PC-9 (cell line): ENCODE measurements at regions of chr4 and their contacts with region 1.

Region 1: GRCh38 chr4:173257732-173258717 is 76.1 kb downstream of the HMGB2 start:
- DNase-seq: peak; percentile 48 to 57
- H3K4me3 ChIP-seq: no peak overlapping the region
- H3K27ac ChIP-seq: no peak overlapping the region
- H3K4me1 ChIP-seq: peaks cover 6% of the 10 kb centered on the region
- H3K27me3 ChIP-seq: no peaks in the 10 kb centered on the region
- CTCF ChIP-seq: peak; percentile 80

Region 2: GRCh38 chr4:172830295-172830764 is 427.7 kb before region 1 on chr4:
- CTCF ChIA-PET with region 1: no interaction called
- POLR2A ChIA-PET with region 1: no interaction called
- intact Hi-C with region 1: loop called (anchors 10 kb)
- DNase-seq: no peak
- H3K4me3 ChIP-seq: no peak overlapping the region
- H3K27ac ChIP-seq: no peak overlapping the region
- H3K4me1 ChIP-seq: no peaks in the 10 kb centered on the region
- H3K27me3 ChIP-seq: no peaks in the 10 kb centered on the region
- CTCF ChIP-seq: peak; percentile 70

Region 3: GRCh38 chr4:172892300-172892699 is 365.7 kb before region 1 on chr4:
- CTCF ChIA-PET with region 1: no interaction called
- POLR2A ChIA-PET with region 1: no interaction called
- intact Hi-C with region 1: loop called (anchors 5 kb)
- DNase-seq: no peak
- H3K4me3 ChIP-seq: no peak overlapping the region
- H3K27ac ChIP-seq: no peak overlapping the region
- H3K4me1 ChIP-seq: no peaks in the 10 kb centered on the region
- H3K27me3 ChIP-seq: no peaks in the 10 kb centered on the region
- CTCF ChIP-seq: peak; percentile 66

Region 4: DNA sequence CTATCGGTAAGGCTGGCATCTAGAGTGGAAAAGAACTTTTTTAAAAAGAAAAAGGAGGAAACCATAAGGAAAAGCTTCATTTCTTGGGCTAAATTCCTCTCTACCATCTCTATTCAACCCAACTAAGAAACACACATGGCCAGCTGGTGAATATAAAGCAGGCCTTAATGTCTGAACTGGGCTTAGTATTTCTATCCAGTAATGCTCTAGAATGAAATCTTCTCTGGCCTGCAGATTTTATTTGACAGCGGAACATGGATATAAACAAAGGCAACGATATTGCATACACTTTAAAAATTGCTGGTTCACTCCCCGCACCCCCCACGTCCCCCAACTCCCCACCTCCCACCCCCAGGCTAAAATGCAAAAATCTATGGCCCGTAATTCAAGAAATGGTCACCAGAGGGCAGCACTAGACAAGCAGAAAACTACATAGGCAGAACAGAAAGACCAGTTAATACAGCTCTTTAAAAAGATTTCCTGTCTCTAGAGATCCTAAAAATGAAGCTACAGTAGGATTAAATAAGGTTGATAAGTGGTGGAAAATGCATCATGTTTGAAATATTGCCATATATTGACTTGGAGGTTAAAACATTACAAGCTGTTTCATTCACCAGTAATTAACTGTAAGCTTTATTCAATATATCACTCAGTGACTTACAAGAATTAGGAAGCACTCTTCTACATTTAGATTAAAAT is 244.6 kb before region 1 on chr4:
- CTCF ChIA-PET with region 1: interaction called, 20 read pairs
- POLR2A ChIA-PET with region 1: no interaction called
- intact Hi-C with region 1: loop called (anchors 1 kb)
- DNase-seq: peak in 1 of 2 experiments; percentile 41
- H3K4me3 ChIP-seq: no peak overlapping the region
- H3K27ac ChIP-seq: no peak overlapping the region
- H3K4me1 ChIP-seq: peaks cover 11% of the 10 kb centered on the region
- H3K27me3 ChIP-seq: no peaks in the 10 kb centered on the region
- CTCF ChIP-seq: peak; percentile 79

Region 5: DNA sequence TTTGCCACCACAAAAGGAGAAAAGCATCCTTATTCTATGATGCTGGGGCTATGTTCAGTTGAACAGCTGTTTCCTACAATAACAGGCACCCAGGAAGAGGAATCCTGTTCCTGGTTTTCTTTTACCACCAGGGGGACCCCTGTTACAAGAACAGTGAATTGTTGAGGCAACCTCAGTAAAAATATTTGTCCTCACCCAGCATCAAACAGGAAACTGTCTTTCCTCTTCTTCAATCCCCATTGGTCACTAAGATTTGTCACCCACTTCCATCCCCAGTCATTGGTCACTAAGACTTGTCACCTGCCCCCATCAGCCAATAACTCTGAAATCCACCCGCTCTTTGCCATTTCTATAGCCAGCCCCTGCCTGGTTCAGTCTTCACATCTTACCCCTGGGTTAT is 232.9 kb before region 1 on chr4:
- CTCF ChIA-PET with region 1: interaction called, 7 read pairs
- POLR2A ChIA-PET with region 1: no interaction called
- intact Hi-C with region 1: loop called (anchors 1 kb)
- DNase-seq: peak; percentile 43 to 62
- H3K4me3 ChIP-seq: no peak overlapping the region
- H3K27ac ChIP-seq: no peak overlapping the region
- H3K4me1 ChIP-seq: no peaks in the 10 kb centered on the region; the same call in 1 of the 2 replicates
- H3K27me3 ChIP-seq: no peaks in the 10 kb centered on the region
- CTCF ChIP-seq: peak; percentile 67

Region 6: GRCh38 chr4:173074501-173074946 is 183.5 kb before region 1 on chr4:
- CTCF ChIA-PET with region 1: interaction called, 22 read pairs
- POLR2A ChIA-PET with region 1: no interaction called
- intact Hi-C with region 1: no loop called
- DNase-seq: peak; percentile 49 to 89
- H3K4me3 ChIP-seq: no peak overlapping the region
- H3K27ac ChIP-seq: peak overlapping the region; percentile 79
- H3K4me1 ChIP-seq: peaks cover 31% of the 10 kb centered on the region
- H3K27me3 ChIP-seq: no peaks in the 10 kb centered on the region
- CTCF ChIP-seq: no peak

Region 7: DNA sequence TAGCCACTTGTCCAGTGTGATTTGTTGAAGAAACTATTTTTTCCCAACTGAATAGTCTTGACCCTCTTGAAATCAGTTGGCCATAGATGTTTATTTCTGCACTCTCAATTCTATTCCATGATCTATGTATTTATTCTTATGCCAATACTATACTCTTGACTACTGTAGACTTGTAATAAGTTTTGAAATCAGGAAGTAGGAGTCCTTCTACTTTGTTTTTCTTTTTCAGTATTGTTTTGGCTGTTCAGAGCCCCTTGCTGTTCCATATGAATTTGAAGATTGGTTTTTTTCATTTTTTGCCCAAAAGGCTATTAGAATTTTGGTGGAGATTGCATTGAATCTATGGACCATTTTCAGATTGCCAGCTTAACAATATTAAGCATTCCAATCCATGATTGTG is 123.0 kb after region 1 on chr4:
- CTCF ChIA-PET with region 1: no interaction called
- POLR2A ChIA-PET with region 1: no interaction called
- intact Hi-C with region 1: no loop called
- DNase-seq: no peak
- H3K4me3 ChIP-seq: no peak overlapping the region
- H3K27ac ChIP-seq: no peak overlapping the region
- H3K4me1 ChIP-seq: no peaks in the 10 kb centered on the region
- H3K27me3 ChIP-seq: no peaks in the 10 kb centered on the region
- CTCF ChIP-seq: no peak